H1 (cell line): ENCODE measurements at regions of chr3 and their contacts with region 1.

Region 1: GRCh38 chr3:172034786-172035685 is 4.3 kb upstream of the FNDC3B start:
- DNase-seq: peak in 1 of 2 experiments; percentile 58
- H3K4me3 ChIP-seq: no peak overlapping the region
- H3K27ac ChIP-seq: no peak overlapping the region
- H3K4me1 ChIP-seq: peaks cover 0 to 3% (median under 1%) of the 10 kb centered on the region in 4 experiments; a peak in 1 of 7 replicates
- H3K27me3 ChIP-seq: no peaks in the 10 kb centered on the region
- CTCF ChIP-seq: peak in 2 of 3 experiments; percentile 47 to 60; a peak in 3 of 4 replicates
- EP300 ChIP-seq: no peak
- POLR2A ChIP-seq: no peak
- RAD21 ChIP-seq: peak; percentile 44 to 58

Region 2: DNA sequence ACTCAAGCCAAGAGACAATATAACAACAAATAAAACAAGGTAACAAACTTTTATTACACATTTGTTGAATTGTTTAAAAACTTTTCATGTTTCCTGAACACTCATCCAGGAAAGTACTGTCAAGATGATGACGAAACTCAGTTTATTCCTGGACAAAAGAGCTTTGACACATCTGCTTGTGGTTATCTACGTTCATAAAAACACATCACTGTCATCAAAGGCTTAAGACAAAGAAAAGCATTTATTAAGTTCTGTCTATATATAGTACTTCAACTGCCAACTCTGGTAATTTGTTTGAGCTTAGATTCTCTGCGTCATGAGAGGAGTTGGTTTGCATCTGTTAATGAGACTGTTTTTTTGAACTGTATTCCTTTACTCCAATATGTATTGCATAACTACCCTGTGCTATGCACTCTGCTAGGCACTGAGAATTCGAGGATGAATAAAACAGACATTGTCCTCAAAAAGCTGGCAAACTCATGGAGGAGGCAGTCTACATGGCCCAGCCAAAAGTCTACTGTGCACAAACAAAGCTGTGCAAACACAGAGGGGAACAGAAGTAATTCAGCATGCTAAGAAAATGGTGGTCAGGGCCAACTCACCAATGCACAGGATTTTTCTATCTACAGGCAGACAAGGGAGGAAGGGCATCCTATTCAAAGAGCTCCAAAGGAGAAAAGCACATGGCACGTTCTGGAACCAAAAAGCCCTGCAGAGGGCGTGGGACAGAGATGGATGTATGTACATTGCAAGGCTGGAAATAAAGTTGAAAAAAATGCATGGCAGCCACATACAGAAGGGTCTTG is 246.3 kb before region 1 on chr3:
- CTCF ChIA-PET with region 1: no interaction called
- POLR2A ChIA-PET with region 1: no interaction called
- DNase-seq: no peak
- H3K4me3 ChIP-seq: no peak overlapping the region
- H3K27ac ChIP-seq: no peak overlapping the region
- H3K4me1 ChIP-seq: peaks cover 0 to 3% (median 3%) of the 10 kb centered on the region in 4 experiments; a peak in 3 of 7 replicates
- H3K27me3 ChIP-seq: no peaks in the 10 kb centered on the region
- CTCF ChIP-seq: no peak
- EP300 ChIP-seq: no peak
- POLR2A ChIP-seq: no peak
- RAD21 ChIP-seq: 0 out of 4 replicates have a peak, but pooled peaks of 1 of the 2 experiments have one; percentile 7

Region 3: GRCh38 chr3:171994646-171995428 is 40.2 kb before region 1 on chr3:
- CTCF ChIA-PET with region 1: no interaction called
- POLR2A ChIA-PET with region 1: no interaction called
- DNase-seq: no peak
- H3K4me3 ChIP-seq: no peak overlapping the region
- H3K27ac ChIP-seq: no peak overlapping the region
- H3K4me1 ChIP-seq: no peaks in the 10 kb centered on the region
- H3K27me3 ChIP-seq: no peaks in the 10 kb centered on the region
- CTCF ChIP-seq: no peak
- EP300 ChIP-seq: no peak
- POLR2A ChIP-seq: no peak
- RAD21 ChIP-seq: no peak

Region 4: GRCh38 chr3:172046268-172046915 is 11.4 kb after region 1 on chr3:
- CTCF ChIA-PET with region 1: interaction called, 16 read pairs
- POLR2A ChIA-PET with region 1: interaction called, 3 read pairs
- DNase-seq: no peak
- H3K4me3 ChIP-seq: no peak overlapping the region
- H3K27ac ChIP-seq: no peak overlapping the region
- H3K4me1 ChIP-seq: peaks cover 0 to 7% (median 2%) of the 10 kb centered on the region in 4 experiments; a peak in 2 of 7 replicates
- H3K27me3 ChIP-seq: no peaks in the 10 kb centered on the region
- CTCF ChIP-seq: no peak
- EP300 ChIP-seq: no peak
- POLR2A ChIP-seq: no peak
- RAD21 ChIP-seq: no peak

Region 5: DNA sequence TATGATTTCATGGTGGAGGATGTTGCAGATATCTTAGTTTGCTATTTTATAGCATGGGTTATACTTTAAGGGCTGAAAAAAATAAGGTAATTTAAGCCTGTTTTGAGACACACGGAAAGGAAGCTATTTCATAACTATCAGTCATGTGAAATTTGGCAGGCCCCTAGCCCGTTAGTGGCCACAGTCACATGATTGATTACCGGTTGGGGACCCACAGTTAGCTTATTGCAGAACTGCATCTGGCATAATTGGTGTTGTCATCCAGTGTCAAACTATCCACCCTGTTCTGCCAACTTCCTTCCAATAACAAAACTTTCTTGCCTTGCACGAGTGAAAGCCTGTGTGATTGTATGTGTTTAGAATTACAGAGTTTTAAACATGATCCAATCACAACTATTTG is 39.5 kb after region 1 on chr3:
- CTCF ChIA-PET with region 1: no interaction called
- POLR2A ChIA-PET with region 1: no interaction called
- DNase-seq: no peak
- H3K4me3 ChIP-seq: no peak overlapping the region
- H3K27ac ChIP-seq: no peak overlapping the region
- H3K4me1 ChIP-seq: peaks cover 0 to 10% (median 4%) of the 10 kb centered on the region in 4 experiments; a peak in 2 of 7 replicates
- H3K27me3 ChIP-seq: no peaks in the 10 kb centered on the region
- CTCF ChIP-seq: no peak
- EP300 ChIP-seq: no peak
- POLR2A ChIP-seq: no peak
- RAD21 ChIP-seq: no peak